PC-9 (cell line): ENCODE measurements at regions of chr5 and their contacts with region 1.

Region 1: GRCh38 chr5:53035868-53036381 is 46.8 kb downstream of the ITGA2 start:
- DNase-seq: no peak
- H3K4me3 ChIP-seq: no peak overlapping the region
- H3K27ac ChIP-seq: peak overlapping the region; percentile 94
- H3K4me1 ChIP-seq: peaks cover 80% of the 10 kb centered on the region
- H3K27me3 ChIP-seq: no peaks in the 10 kb centered on the region
- CTCF ChIP-seq: peak; percentile 38; the same call in 1 of the 2 replicates

Region 2: GRCh38 chr5:52964138-52964537 is 71.8 kb before region 1 on chr5:
- CTCF ChIA-PET with region 1: no interaction called
- POLR2A ChIA-PET with region 1: interaction called, 12 read pairs
- intact Hi-C with region 1: loop called (anchors 10 kb)
- DNase-seq: no peak
- H3K4me3 ChIP-seq: no peak overlapping the region
- H3K27ac ChIP-seq: peak overlapping the region; percentile 53
- H3K4me1 ChIP-seq: peaks cover 14% of the 10 kb centered on the region
- H3K27me3 ChIP-seq: no peaks in the 10 kb centered on the region
- CTCF ChIP-seq: no peak; the same call in 1 of the 2 replicates

Region 3: DNA sequence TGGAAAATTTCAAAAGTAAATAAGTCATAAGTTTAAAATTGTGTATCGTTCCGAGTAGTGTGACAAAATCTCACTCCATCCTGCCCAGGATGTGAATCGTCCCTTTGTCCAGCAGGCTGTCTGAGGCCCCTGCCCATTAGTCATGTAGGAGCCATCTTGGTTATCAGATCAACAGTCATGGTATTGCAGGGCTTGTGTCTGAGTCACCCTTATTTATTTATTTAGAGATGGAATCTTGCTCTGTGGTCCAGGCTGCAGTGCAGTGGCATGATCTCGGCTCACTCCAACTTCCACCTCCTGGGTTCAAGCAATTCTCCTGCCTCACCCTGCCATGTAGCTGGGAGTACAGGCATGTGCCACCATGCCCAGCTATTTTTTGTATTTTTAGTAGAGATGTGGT is 16.6 kb before region 1 on chr5:
- CTCF ChIA-PET with region 1: no interaction called
- POLR2A ChIA-PET with region 1: no interaction called
- intact Hi-C with region 1: loop called (anchors 1 kb)
- DNase-seq: peak; percentile 51 to 77
- H3K4me3 ChIP-seq: no peak overlapping the region
- H3K27ac ChIP-seq: peak overlapping the region; percentile 22
- H3K4me1 ChIP-seq: peaks cover 59% of the 10 kb centered on the region
- H3K27me3 ChIP-seq: no peaks in the 10 kb centered on the region
- CTCF ChIP-seq: no peak